Adrenal gland (tissue), 19 donors: ENCODE measurements at regions of chr10 and their contacts with region 1.

Region 1: GRCh38 chr10:119061352-119061751 is 19.3 kb downstream of the EIF3A start:
- DNase-seq: no peak
- H3K4me3 ChIP-seq: no peak overlapping the region
- H3K27ac ChIP-seq: no peak overlapping the region
- H3K4me1 ChIP-seq: no peaks in the 10 kb centered on the region
- H3K27me3 ChIP-seq: no peaks in the 10 kb centered on the region
- CTCF ChIP-seq: no peak
- POLR2A ChIP-seq: no peak

Region 2: DNA sequence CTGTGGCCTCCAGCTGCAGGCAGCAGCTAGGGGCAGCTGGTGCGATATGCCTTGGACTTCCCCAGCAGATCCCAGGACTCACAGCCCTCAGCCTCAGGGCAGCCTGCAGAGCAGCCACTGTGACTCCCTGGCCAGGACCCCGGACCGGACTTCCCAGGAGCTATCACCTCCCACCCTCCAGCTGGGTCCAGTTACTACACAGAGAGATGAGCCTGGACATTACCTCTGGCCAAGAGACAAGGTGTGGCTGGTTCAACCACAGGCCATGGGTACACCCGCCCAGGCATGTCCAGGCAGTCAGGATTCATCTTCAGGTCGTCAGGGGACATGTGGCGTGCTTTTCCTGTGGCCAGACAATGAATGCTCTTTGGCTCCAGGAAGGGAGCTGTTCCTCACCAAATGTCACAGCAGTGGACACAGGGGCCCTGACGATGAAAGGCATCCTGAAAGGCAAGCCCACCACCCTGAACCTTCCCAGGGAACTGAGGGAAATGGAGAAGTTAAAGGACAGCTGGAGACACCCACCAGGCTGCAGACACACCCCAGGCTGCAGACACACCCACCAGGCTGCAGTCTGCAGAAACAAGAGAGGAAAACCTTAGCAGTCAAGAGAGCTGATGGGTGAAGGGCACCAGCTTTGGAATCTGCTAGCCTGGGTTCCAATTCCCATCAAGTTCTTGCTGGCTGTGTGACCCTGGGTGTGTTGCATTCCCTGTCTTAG is 57.6 kb before region 1 on chr10:
- intact Hi-C with region 1: no loop called
- DNase-seq: no peak
- H3K4me3 ChIP-seq: no peak overlapping the region
- H3K27ac ChIP-seq: no peak overlapping the region
- H3K4me1 ChIP-seq: peaks cover 0 to 12% of the 10 kb centered on the region in 2 donors
- H3K27me3 ChIP-seq: no peaks in the 10 kb centered on the region
- CTCF ChIP-seq: no peak
- POLR2A ChIP-seq: no peak

Region 3: GRCh38 chr10:119028900-119029612 is 32.3 kb before region 1 on chr10:
- intact Hi-C with region 1: loop called in 1 of 2 experiments (anchors 5 kb)
- DNase-seq: peak; percentile 91 to 96 (median 93)
- H3K4me3 ChIP-seq: peak overlapping the region in 2 of 4 donors; percentile 0 to 71
- H3K27ac ChIP-seq: peak overlapping the region in 4 of 5 donors; percentile 4 to 88 (median 70)
- H3K4me1 ChIP-seq: peaks cover 13 to 15% of the 10 kb centered on the region in 2 donors
- H3K27me3 ChIP-seq: no peaks in the 10 kb centered on the region
- CTCF ChIP-seq: peak in 4 of 6 experiments; percentile 14 to 50 (median 38)
- POLR2A ChIP-seq: no peak